ENCODE measurements at regions of chr1 and their contacts with region 1.

Region 1: GRCh38 chr1:36696261-36696940 is 213.7 kb upstream of the CSF3R start:
- DNase-seq: no peak
- H3K4me3 ChIP-seq: no peak overlapping the region
- H3K27ac ChIP-seq: no peak overlapping the region
- H3K4me1 ChIP-seq: no peaks in the 10 kb centered on the region
- H3K27me3 ChIP-seq: no peaks in the 10 kb centered on the region
- CTCF ChIP-seq: no peak
- EP300 ChIP-seq: no peak
- POLR2A ChIP-seq: no peak

Region 2: DNA sequence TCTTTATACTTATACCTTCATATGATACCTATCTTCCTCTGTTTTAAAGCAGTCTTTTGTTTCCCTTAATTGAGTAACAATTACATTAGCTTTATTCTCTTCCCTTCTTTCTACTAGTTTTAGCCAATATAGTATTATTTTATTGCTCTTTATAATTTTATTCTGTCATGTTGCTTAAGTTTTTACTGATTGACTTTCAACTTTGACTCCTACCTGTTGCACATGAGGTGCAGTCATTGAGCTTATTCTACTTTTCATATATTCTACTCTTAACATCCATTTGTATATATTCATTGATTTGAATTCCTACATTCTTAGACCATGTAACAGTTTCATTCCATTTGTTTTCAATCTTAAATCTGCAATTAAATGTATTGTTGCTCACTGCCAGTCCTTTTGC is 716.3 kb before region 1 on chr1:
- intact Hi-C with region 1: no loop called
- DNase-seq: no peak
- H3K4me3 ChIP-seq: no peak overlapping the region
- H3K27ac ChIP-seq: no peak overlapping the region
- H3K4me1 ChIP-seq: no peaks in the 10 kb centered on the region
- H3K27me3 ChIP-seq: no peaks in the 10 kb centered on the region
- CTCF ChIP-seq: no peak
- EP300 ChIP-seq: no peak
- POLR2A ChIP-seq: no peak

Region 3: DNA sequence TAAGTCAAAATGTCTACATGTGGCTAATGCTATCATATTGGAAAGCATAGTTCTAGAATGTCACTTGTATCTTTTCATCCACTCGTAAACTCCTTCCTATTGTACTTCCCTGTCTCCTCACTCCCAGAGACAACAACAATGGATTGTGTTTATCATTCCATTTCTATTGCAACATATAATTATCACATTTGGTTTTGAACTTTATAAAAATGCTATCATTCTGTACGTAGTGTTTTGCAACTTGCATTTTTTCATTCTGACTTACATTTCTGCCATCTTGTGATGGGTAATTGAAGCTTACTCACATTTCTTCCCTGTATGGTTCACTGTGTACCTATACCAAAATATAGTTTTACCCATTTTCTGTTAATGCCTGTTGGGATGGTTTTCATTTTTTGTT is 199.2 kb before region 1 on chr1:
- intact Hi-C with region 1: no loop called
- DNase-seq: no peak
- H3K4me3 ChIP-seq: no peak overlapping the region
- H3K27ac ChIP-seq: no peak overlapping the region
- H3K4me1 ChIP-seq: no peaks in the 10 kb centered on the region
- H3K27me3 ChIP-seq: no peaks in the 10 kb centered on the region
- CTCF ChIP-seq: no peak
- EP300 ChIP-seq: no peak
- POLR2A ChIP-seq: no peak

Region 4: DNA sequence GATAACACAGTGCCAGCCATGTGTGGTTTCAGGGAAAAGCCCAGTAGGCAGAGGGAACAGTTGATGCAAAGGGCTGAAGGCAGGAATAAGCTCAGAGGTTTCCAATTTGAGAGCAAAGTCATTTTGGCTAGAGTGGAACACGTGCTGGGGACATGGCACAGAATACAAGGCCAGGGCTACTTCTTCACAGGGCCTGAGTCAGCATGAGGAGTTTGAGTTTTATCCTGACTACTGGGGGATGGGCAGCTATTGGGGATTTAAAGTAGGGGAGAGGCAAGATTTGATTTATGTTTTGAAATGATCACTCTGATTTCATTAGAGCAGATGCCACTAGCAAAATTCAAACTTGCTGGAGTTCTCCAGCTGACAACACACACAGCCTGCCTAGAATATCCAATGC is 27.4 kb after region 1 on chr1:
- intact Hi-C with region 1: loop called in 1 of 4 experiments (anchors 2 kb)
- DNase-seq: no peak
- H3K4me3 ChIP-seq: no peak overlapping the region
- H3K27ac ChIP-seq: no peak overlapping the region
- H3K4me1 ChIP-seq: no peaks in the 10 kb centered on the region
- H3K27me3 ChIP-seq: no peaks in the 10 kb centered on the region
- CTCF ChIP-seq: no peak
- EP300 ChIP-seq: no peak
- POLR2A ChIP-seq: no peak